ENCODE measurements at regions of chr12 and their contacts with region 1.

Region 1: GRCh38 chr12:66279123-66279712 is 23.1 kb upstream of the HELB start:
- DNase-seq: peak; percentile 71
- H3K4me3 Mint-ChIP-seq: no peak overlapping the region
- H3K27ac Mint-ChIP-seq: no peak overlapping the region
- H3K4me1 Mint-ChIP-seq: peaks cover 30% of the 10 kb centered on the region
- H3K27me3 Mint-ChIP-seq: peaks cover 3% of the 10 kb centered on the region

Region 2: DNA sequence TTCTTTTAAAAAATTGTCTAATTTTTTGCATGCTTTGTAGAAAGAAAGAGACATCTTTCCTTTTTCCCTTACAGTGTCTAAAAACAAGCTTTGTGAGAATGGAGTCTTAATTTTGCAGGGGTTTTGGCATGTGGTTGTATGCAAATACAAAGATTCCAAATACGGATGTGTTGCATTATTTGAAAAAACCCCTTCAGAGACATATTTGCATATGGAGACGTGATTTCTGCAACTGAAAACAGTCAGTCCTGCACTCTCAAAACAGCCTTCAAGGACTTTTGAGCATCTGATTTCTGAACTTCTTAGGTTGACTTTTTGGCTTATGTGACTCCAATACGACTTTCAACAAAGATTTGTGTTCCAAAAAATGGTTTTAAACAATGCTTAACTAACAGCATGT is 82.4 kb before region 1 on chr12:
- CTCF ChIA-PET with region 1: no interaction called
- DNase-seq: no peak
- H3K4me3 Mint-ChIP-seq: no peak overlapping the region
- H3K27ac Mint-ChIP-seq: no peak overlapping the region
- H3K4me1 Mint-ChIP-seq: peaks cover 5% of the 10 kb centered on the region
- H3K27me3 Mint-ChIP-seq: peaks cover 6% of the 10 kb centered on the region

Region 3: GRCh38 chr12:66301944-66302826 is 23.0 kb after region 1 on chr12 and contains the start of gene HELB:
- CTCF ChIA-PET with region 1: interaction called, 10 read pairs
- DNase-seq: peak; percentile 99
- H3K4me3 Mint-ChIP-seq: peak within 1 kb of the TSS; percentile 98
- H3K27ac Mint-ChIP-seq: peak within 1 kb of the TSS; percentile 98
- H3K4me1 Mint-ChIP-seq: peaks cover 45% of the 10 kb centered on the region
- H3K27me3 Mint-ChIP-seq: peaks cover 21% of the 10 kb centered on the region